CD4-positive, alpha-beta memory T cell (primary cell): ENCODE measurements at regions of chr6 and their contacts with region 1.

Region 1: DNA sequence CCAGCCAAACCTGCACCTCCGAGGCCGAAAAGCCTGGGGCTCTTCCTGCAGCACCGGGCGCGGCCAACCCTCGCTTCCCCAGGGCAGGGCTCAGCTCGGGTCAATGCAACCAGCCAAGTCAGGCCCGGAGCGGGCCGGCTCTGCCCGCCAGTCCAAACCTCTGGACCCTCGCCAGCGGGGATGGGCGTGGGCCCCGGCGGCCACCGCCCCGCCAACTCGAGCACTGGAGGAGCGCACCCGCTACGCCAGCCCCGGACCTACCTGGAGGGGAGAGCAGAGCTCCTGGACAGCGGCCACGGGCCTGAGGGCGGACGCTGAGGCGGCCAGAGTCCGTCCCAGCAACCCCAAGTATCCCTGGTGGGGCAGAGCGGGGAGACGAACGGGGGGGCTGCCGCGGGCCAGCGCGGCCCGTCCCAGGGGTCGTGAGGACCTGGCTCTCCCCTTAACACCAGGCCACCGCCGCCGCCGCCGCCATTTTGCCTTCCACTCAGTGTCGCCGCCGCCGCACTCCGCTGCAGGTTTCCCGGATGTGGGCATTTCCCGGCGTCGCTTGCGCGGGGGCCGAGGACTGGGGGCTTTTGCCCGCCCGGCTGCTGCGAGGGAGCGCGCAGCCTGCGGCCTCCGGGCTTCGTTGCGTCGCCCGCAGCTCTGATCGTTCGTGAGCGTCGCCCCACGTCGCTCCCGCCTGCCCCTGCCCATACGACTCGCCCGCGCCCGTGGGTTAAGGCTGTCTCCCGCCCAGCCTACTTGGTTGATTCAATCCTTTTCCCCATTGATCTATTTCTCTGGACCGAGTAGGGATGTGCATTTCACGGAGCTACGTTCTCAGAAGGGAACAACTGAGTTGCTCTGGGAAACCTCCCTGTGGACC is at the start of gene LATS1:
- DNase-seq: peak; percentile 90 to 93 (median 91)
- H3K4me3 ChIP-seq: peak within 1 kb of the TSS; percentile 82 to 95
- H3K4me3 Mint-ChIP-seq: peak within 1 kb of the TSS; percentile 89 to 98 (median 94)
- H3K27ac ChIP-seq: peak within 1 kb of the TSS; percentile 94
- H3K27ac Mint-ChIP-seq: peak within 1 kb of the TSS; percentile 95 to 99 (median 97)
- H3K4me1 ChIP-seq: peaks cover 43% of the 10 kb centered on the region
- H3K4me1 Mint-ChIP-seq: peaks cover 26 to 54% (median 39%) of the 10 kb centered on the region in 4 donors
- H3K27me3 ChIP-seq: no peaks in the 10 kb centered on the region
- H3K27me3 Mint-ChIP-seq: no peaks in the 10 kb centered on the region
- total RNA-seq, gene LATS1: 47.4 to 51.8 TPM

Region 2: GRCh38 chr6:149628875-149629510 is 88.8 kb before region 1 on chr6:
- CTCF ChIA-PET with region 1: no interaction called
- POLR2A ChIA-PET with region 1: no interaction called
- intact Hi-C with region 1: no loop called
- DNase-seq: no peak
- H3K4me3 ChIP-seq: no peak overlapping the region
- H3K4me3 Mint-ChIP-seq: no peak overlapping the region
- H3K27ac ChIP-seq: no peak overlapping the region
- H3K27ac Mint-ChIP-seq: peak overlapping the region in 1 of 7 donors; percentile 38
- H3K4me1 ChIP-seq: no peaks in the 10 kb centered on the region
- H3K4me1 Mint-ChIP-seq: peaks cover 0 to 9% (median 5%) of the 10 kb centered on the region in 4 donors
- H3K27me3 ChIP-seq: no peaks in the 10 kb centered on the region
- H3K27me3 Mint-ChIP-seq: no peaks in the 10 kb centered on the region

Region 3: GRCh38 chr6:149648148-149649145 is 69.4 kb before region 1 on chr6 and contains the start of gene KATNA1:
- CTCF ChIA-PET with region 1: no interaction called
- POLR2A ChIA-PET with region 1: interaction called, 16 read pairs
- intact Hi-C with region 1: loop called (anchors 2 kb)
- DNase-seq: peak; percentile 83 to 87 (median 84)
- H3K4me3 ChIP-seq: peak within 1 kb of the TSS; percentile 61 to 84
- H3K4me3 Mint-ChIP-seq: peak within 1 kb of the TSS; percentile 82 to 94 (median 92)
- H3K27ac ChIP-seq: peak within 1 kb of the TSS; percentile 74
- H3K27ac Mint-ChIP-seq: peak within 1 kb of the TSS; percentile 85 to 95 (median 90)
- H3K4me1 ChIP-seq: peaks cover 35% of the 10 kb centered on the region
- H3K4me1 Mint-ChIP-seq: peaks cover 14 to 45% (median 25%) of the 10 kb centered on the region in 4 donors
- H3K27me3 ChIP-seq: no peaks in the 10 kb centered on the region
- H3K27me3 Mint-ChIP-seq: no peaks in the 10 kb centered on the region
- total RNA-seq, gene KATNA1: 18.2 to 21.4 TPM

Region 4: GRCh38 chr6:149701714-149702113 is 16.1 kb before region 1 on chr6:
- CTCF ChIA-PET with region 1: interaction called, 4 read pairs
- POLR2A ChIA-PET with region 1: interaction called, 15 read pairs
- intact Hi-C with region 1: no loop called
- DNase-seq: no peak
- H3K4me3 ChIP-seq: no peak overlapping the region
- H3K4me3 Mint-ChIP-seq: no peak overlapping the region
- H3K27ac ChIP-seq: no peak overlapping the region
- H3K27ac Mint-ChIP-seq: peak overlapping the region in 3 of 7 donors; percentile 22 to 29 (median 25)
- H3K4me1 ChIP-seq: peaks cover 43% of the 10 kb centered on the region
- H3K4me1 Mint-ChIP-seq: peaks cover 28 to 54% (median 43%) of the 10 kb centered on the region in 4 donors
- H3K27me3 ChIP-seq: no peaks in the 10 kb centered on the region
- H3K27me3 Mint-ChIP-seq: no peaks in the 10 kb centered on the region

Region 5: DNA sequence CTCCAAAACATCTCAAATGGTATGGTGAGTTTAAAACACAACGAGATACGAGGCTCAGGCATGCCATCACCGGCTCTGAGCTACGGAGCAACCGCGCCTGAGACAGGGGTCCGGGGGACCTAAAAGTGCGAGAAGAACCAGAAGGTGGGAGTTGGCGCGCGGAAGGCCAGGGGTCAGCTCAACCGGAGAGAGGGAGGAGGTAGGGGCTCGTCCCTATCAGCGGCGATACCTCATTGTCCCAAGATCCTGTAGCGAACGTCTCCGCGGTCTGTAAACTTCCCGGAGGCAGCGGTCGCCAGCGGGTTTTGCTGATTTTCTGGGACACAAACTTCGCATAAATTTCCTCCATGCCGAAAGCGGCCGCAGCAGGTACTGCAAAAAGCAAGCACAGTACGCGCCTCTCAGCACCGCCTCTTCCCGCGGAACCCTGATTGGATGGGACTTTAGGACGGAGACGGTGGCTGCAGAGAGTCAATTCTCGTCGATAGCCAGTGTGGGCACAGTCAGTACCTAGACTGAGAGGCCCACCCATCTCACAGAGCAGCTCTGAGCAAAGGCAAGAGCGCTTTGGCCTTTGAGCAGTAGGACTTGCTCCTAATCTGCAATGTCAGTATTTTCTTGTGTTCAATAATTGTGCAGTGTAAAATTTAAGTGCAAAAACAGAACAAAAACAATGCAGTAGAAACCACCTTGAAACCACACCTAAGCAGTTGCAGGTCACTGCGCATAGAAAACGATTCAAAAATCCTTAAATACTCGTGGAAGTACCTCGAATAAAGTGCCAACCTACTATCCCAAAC is 28.5 kb after region 1 on chr6 and contains the start of gene NUP43:
- CTCF ChIA-PET with region 1: interaction called, 4 read pairs
- POLR2A ChIA-PET with region 1: interaction called, 82 read pairs
- intact Hi-C with region 1: loop called (anchors 1 kb)
- DNase-seq: peak; percentile 89 to 92 (median 89)
- H3K4me3 ChIP-seq: peak within 1 kb of the TSS; percentile 87 to 90
- H3K4me3 Mint-ChIP-seq: peak within 1 kb of the TSS; percentile 92 to 99 (median 97)
- H3K27ac ChIP-seq: peak within 1 kb of the TSS; percentile 78
- H3K27ac Mint-ChIP-seq: peak within 1 kb of the TSS; percentile 88 to 97 (median 94)
- H3K4me1 ChIP-seq: peaks cover 36% of the 10 kb centered on the region
- H3K4me1 Mint-ChIP-seq: peaks cover 18 to 47% (median 31%) of the 10 kb centered on the region in 4 donors
- H3K27me3 ChIP-seq: no peaks in the 10 kb centered on the region
- H3K27me3 Mint-ChIP-seq: no peaks in the 10 kb centered on the region
- total RNA-seq, gene NUP43: 56.0 to 58.3 TPM

Region 6: DNA sequence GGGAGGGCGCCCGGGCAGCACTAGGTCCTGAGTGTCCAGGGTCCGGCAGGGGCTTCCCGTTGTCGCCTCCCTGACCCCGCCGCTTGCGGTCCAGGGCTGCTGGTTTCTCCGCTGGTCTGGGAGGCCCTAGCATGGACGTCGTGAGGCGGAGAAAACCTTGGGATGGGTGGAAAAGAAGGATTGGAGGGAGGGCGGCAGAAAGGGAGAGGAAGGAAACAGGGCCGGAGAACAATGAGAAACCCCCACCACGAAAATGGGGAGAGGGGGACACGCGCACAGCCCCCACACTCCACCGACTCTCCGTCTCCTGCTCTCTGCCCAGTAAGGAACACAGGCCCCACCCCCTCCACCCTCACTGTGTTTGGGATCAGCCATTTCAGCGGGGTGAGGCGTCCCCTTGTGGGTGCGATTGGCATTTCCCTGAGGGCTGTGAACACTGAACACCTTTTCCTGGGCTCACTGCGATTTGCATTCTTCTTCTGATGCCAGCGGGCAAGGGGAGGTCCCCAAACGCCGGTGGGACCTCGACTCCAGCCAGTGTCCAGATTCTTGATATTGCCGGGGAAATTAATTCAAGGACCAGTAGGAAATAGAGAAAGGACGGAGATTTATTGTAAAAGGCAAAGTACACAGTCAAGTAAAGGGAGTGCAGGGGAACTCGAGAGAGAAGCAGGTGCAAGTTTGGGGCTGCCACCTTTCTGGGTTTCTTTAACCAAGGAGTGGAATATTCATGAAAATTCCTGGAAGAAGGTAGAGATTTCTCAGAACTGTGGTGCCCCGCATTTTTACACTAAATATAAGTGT is 208.4 kb after region 1 on chr6:
- CTCF ChIA-PET with region 1: no interaction called
- POLR2A ChIA-PET with region 1: no interaction called
- intact Hi-C with region 1: loop called (anchors 1 kb)
- DNase-seq: peak; percentile 59 to 70 (median 63)
- H3K4me3 ChIP-seq: no peak overlapping the region
- H3K4me3 Mint-ChIP-seq: peak overlapping the region; percentile 14 to 60 (median 28)
- H3K27ac ChIP-seq: no peak overlapping the region
- H3K27ac Mint-ChIP-seq: peak overlapping the region in 1 of 7 donors; percentile 5
- H3K4me1 ChIP-seq: peaks cover 29% of the 10 kb centered on the region
- H3K4me1 Mint-ChIP-seq: peaks cover 11 to 38% (median 21%) of the 10 kb centered on the region in 4 donors
- H3K27me3 ChIP-seq: peaks cover 47% of the 10 kb centered on the region
- H3K27me3 Mint-ChIP-seq: peaks cover 73 to 82% of the 10 kb centered on the region in 2 donors